AG04450 (cell line): ENCODE measurements at regions of chr10 and their contacts with region 1.

Region 1: DNA sequence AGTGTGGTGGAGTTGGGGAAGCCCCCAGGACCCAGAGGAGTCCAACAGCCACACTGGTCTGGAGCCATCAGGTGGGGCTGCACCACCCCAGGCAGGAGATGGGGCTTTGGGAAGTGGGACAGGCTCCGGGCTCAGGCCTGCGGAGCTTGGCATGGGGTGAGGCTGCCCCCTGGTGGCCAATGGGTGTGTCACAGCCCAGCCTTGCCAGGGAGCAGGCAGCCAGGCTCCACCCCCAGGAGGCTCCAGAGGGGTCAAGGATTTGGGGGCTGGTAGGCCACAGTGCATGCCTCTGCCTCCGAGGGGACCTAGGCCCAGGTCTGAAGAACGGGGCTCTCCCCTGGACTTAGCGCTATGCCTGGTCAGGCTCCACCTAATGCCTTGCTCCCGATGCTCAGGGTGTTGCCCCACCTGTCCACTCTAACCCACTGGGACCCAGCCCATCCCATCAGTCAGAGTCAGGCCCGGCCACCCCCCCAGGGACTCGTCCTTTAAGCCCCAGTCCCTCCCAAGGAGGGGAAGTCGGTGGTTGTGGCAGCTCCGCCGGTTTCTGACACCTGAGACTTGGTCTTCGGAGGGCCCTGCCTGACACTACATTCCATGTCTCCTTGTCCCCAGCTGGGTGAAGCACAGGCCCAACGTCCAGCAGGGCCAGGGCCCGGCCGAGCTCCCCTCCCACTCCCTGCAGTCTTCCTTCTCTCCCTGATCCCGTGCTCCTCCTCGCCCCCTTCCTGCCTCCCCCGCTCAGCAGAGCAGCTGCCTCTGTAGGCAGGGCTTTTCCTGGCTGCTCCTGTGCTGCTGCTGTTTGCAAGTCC is 11.3 kb upstream of the SAMD8 start:
- DNase-seq: peak; percentile 27
- H3K4me3 ChIP-seq: no peak overlapping the region
- H3K27ac ChIP-seq: no peak overlapping the region
- H3K27me3 ChIP-seq: no peaks in the 10 kb centered on the region
- CTCF ChIP-seq: peak; percentile 97

Region 2: DNA sequence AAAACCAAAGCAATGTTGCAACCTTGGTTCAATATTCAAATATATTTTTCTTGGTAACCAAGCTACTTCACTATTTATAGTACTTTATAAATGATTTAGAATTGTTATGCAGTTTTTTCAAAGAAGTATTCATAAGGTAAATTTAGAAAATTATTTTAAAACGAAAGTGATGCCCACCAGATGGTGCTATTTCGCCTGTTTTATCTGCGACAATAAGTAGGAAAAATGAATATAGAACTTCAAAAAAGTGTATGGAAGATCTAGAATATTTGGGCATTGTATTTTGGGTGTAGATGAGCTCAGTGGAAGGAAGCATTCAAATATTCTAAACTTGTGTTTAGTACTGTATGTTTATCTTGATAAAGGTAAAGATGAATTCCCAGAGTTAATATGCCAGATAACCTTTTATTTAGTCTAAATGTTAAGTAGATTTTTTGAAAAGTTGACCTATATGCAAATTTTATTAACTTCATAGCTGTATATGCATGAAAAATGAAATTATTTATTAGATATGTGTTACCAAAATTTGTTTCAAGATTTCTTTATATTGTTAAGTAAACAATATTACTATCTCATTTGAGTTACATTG is 856.0 kb before region 1 on chr10:
- CTCF ChIA-PET with region 1: interaction called, 106 read pairs
- POLR2A ChIA-PET with region 1: no interaction called
- DNase-seq: peak; percentile 26
- H3K4me3 ChIP-seq: no peak overlapping the region
- H3K27ac ChIP-seq: no peak overlapping the region
- H3K27me3 ChIP-seq: no peaks in the 10 kb centered on the region
- CTCF ChIP-seq: peak; percentile 48